ENCODE measurements at regions of chr18 and their contacts with region 1.

Region 1: DNA sequence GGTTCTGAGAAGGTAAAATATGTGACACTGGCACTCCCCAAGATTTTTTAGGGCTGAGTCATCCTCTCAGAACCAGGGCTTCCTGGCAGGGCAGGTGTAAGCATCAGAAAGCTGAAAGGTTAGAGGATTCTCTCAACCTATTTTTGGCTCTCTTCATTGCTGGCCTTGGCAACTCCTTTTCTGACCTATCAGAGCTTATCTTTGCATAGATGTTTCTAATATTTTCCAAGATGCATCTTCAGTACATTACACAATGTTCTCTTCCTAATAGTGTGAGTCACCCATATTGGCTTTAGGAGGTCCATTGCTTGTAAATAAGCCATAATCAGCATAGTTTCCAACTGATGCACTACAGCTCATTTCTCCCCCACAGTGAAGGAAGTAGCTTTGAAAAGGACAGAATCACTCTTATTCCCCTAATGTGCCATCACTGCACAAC is 2008.4 kb upstream of the PIK3C3 start:
- DNase-seq: no peak
- H3K4me3 Mint-ChIP-seq: no peak overlapping the region
- H3K27ac Mint-ChIP-seq: no peak overlapping the region
- H3K4me1 Mint-ChIP-seq: no peaks in the 10 kb centered on the region
- H3K27me3 Mint-ChIP-seq: no peaks in the 10 kb centered on the region

Region 2: GRCh38 chr18:39655341-39655740 is 291.3 kb before region 1 on chr18:
- CTCF ChIA-PET with region 1: no interaction called
- intact Hi-C with region 1: loop called (anchors 10 kb)
- DNase-seq: no peak
- H3K4me3 Mint-ChIP-seq: no peak overlapping the region
- H3K27ac Mint-ChIP-seq: no peak overlapping the region
- H3K4me1 Mint-ChIP-seq: no peaks in the 10 kb centered on the region
- H3K27me3 Mint-ChIP-seq: no peaks in the 10 kb centered on the region

Region 3: DNA sequence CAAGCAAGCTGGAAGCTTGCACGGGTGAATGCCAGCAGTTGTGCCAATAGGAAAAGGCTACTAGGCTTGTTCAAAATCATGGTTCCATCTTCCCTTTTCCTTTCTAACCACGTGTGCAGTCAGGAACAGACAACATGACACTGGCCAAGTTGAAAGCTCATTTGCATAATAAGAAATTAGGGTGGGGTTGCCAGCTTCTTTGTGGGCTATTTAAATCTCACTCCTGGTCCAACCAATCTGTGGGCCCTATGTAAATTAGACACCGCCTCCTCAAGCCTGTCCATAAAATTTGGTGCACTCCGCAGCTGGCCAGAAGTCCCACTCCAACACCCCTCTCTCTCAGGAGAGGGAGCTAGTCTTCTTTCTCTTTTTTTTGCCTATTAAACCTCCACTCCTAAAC is 60.0 kb after region 1 on chr18:
- CTCF ChIA-PET with region 1: no interaction called
- intact Hi-C with region 1: loop called (anchors 10 kb)
- DNase-seq: no peak
- H3K4me3 Mint-ChIP-seq: no peak overlapping the region
- H3K27ac Mint-ChIP-seq: no peak overlapping the region
- H3K4me1 Mint-ChIP-seq: no peaks in the 10 kb centered on the region
- H3K27me3 Mint-ChIP-seq: no peaks in the 10 kb centered on the region

Measured in activated naive CD4-positive, alpha-beta T cell treated with anti-CD3 and anti-CD28 coated beads for 36 hours (primary cell).